Activated naive CD4-positive, alpha-beta T cell treated with anti-CD3 and anti-CD28 coated beads, Interleukin-2, amount 10 ng/mL, durations not matched to agents 7 days and 5 days (primary cell): ENCODE measurements at regions of chr22 and their contacts with region 1.

Region 1: DNA sequence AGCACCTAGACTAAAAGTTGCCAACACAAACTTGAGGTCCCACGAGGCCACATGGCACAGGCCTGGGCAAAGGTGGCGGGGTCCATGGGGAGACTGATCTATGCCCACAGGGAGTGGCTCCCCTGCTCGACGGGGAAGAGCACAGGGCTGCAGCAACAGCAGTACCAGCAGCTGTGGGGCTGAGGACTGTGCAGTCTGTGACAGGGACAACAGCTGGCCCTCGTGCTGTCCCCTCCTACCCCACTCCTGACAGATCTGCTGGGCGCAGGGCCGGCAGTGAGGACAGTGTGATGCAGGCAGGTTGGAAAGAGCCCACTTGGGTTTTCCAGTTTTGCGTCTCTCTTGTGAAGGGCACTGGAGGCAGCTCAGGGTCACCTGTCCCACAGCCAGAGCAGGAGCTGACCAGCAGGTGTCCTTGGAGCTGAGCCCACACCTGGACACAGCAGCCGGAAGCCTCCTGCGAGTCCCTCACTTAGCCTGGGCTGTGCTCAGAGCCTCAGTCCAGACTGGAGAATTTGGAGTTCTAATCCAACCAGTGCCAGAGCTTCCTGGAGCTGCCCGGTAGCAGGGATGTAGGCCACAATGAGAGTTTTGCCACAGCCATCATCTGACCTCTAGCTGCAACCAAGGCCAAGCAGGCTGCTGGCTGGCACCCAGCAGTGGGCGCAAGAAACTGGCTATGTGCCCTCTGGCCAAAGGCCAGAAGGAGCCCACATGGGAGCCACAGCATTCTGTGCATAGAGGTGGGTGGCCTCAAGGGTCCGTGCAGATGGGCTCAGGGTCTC is 3.6 kb upstream of the GAS2L1 start:
- DNase-seq: no peak
- H3K4me3 Mint-ChIP-seq: no peak overlapping the region
- H3K27ac Mint-ChIP-seq: no peak overlapping the region
- H3K4me1 Mint-ChIP-seq: peaks cover 15% of the 10 kb centered on the region
- H3K27me3 Mint-ChIP-seq: peaks cover 32% of the 10 kb centered on the region

Region 2: GRCh38 chr22:29313121-29313580 is 10.3 kb after region 1 on chr22:
- CTCF ChIA-PET with region 1: interaction called, 12 read pairs
- DNase-seq: peak; percentile 41
- H3K4me3 Mint-ChIP-seq: no peak overlapping the region
- H3K27ac Mint-ChIP-seq: no peak overlapping the region
- H3K4me1 Mint-ChIP-seq: peaks cover 53% of the 10 kb centered on the region
- H3K27me3 Mint-ChIP-seq: peaks cover 87% of the 10 kb centered on the region